Activated CD8-positive, alpha-beta T cell treated with anti-CD3 and anti-CD28 coated beads, Interleukin-2, amount 10 ng/mL, durations not matched to agents 7 days and 5 days (primary cell): ENCODE measurements at regions of chr7 and their contacts with region 1.

Region 1: GRCh38 chr7:101410743-101411507 is 48.2 kb downstream of the COL26A1 start:
- DNase-seq: peak; percentile 50
- ATAC-seq: peak; percentile 39
- H3K4me3 Mint-ChIP-seq: no peak overlapping the region
- H3K27ac Mint-ChIP-seq: peak overlapping the region; percentile 44
- H3K4me1 Mint-ChIP-seq: peaks cover 12% of the 10 kb centered on the region
- H3K27me3 Mint-ChIP-seq: peaks cover 3% of the 10 kb centered on the region

Region 2: DNA sequence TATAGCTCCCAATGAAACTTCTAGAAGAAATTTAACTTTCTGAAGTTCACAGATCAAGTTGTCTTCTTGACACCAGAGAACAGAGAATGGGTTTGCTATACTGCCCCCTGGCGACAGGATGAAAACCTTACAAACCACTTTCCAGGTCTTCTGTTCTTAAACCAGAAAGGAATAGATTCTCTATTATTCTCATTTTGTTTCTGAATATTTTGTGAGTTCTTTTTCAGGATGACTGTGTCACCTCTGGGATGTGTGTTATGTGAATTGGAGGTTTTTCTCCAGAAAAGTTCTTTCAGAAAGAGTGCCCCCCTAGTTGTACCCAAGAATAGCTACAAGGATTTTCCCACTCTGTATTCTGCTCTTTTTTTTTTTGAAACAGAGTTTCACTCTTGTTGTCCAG is 95.6 kb before region 1 on chr7:
- CTCF ChIA-PET with region 1: no interaction called
- POLR2A ChIA-PET with region 1: no interaction called
- DNase-seq: peak; percentile 73
- ATAC-seq: no peak
- H3K4me3 Mint-ChIP-seq: no peak overlapping the region
- H3K27ac Mint-ChIP-seq: no peak overlapping the region
- H3K4me1 Mint-ChIP-seq: no peaks in the 10 kb centered on the region
- H3K27me3 Mint-ChIP-seq: no peaks in the 10 kb centered on the region

Region 3: DNA sequence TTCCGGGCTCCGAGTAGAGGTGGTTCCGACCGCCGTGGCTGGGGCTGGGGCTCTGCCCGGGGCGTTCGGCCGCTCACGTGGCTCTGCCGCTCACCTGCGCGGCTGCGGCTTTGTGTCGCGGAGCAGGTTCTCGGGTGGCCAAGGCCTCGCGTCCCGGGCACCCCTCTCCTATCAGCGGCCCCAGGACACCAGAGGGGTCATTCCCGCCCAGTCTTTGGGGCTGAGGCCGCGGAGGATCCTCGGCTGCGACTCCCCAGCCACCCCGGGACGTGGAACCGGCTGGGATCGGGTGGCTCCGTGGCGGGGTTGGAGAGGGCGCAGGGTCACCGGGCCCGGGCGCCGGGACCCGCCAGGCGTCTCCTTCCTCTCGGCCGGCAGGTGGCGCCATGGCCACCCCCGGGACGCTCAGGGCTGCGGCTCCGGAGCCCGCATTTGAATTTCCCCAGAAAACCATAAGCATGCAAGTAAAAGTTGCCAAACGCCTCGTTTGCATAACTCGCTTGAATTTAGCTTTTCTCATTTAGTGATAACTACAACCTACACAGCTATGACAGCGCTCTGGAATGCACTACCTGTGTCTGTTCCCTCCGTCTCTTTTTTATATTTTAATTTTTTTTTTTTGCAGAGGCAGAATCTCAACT is 47.1 kb before region 1 on chr7:
- CTCF ChIA-PET with region 1: interaction called, 65 read pairs
- POLR2A ChIA-PET with region 1: no interaction called
- DNase-seq: peak; percentile 77
- ATAC-seq: peak; percentile 94
- H3K4me3 Mint-ChIP-seq: no peak overlapping the region
- H3K27ac Mint-ChIP-seq: no peak overlapping the region
- H3K4me1 Mint-ChIP-seq: peaks cover 17% of the 10 kb centered on the region
- H3K27me3 Mint-ChIP-seq: peaks cover 25% of the 10 kb centered on the region

Region 4: GRCh38 chr7:101382937-101383336 is 28.0 kb before region 1 on chr7:
- CTCF ChIA-PET with region 1: interaction called, 13 read pairs
- POLR2A ChIA-PET with region 1: no interaction called
- DNase-seq: no peak
- ATAC-seq: no peak
- H3K4me3 Mint-ChIP-seq: no peak overlapping the region
- H3K27ac Mint-ChIP-seq: no peak overlapping the region
- H3K4me1 Mint-ChIP-seq: peaks cover 9% of the 10 kb centered on the region
- H3K27me3 Mint-ChIP-seq: peaks cover 10% of the 10 kb centered on the region

Region 5: GRCh38 chr7:101390901-101391301 is 20.0 kb before region 1 on chr7:
- CTCF ChIA-PET with region 1: interaction called, 31 read pairs
- POLR2A ChIA-PET with region 1: no interaction called
- DNase-seq: peak; percentile 82
- ATAC-seq: peak; percentile 88
- H3K4me3 Mint-ChIP-seq: peak overlapping the region; percentile 51
- H3K27ac Mint-ChIP-seq: peak overlapping the region; percentile 87
- H3K4me1 Mint-ChIP-seq: peaks cover 35% of the 10 kb centered on the region
- H3K27me3 Mint-ChIP-seq: peaks cover 6% of the 10 kb centered on the region

Region 6: DNA sequence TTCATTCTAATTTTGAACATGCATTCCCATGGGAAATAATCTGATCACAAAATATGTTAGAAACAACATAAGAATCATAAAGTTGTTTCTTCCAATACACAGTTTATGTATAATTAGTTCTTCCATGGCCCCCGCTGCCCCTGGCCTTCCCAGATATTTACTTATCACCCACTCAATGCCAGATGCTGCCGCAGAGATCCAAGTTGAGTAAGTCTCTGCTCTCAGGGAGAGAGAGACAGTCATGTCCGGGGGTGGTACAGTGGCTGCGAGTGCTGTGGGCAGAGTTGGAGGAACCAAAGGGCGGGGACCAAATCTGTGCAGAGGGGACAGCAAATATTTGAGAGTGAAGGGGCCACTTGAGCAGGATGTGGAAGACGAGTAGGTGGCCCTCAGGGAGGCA is 11.2 kb before region 1 on chr7:
- CTCF ChIA-PET with region 1: interaction called, 22 read pairs
- POLR2A ChIA-PET with region 1: no interaction called
- DNase-seq: no peak
- ATAC-seq: no peak
- H3K4me3 Mint-ChIP-seq: no peak overlapping the region
- H3K27ac Mint-ChIP-seq: no peak overlapping the region
- H3K4me1 Mint-ChIP-seq: no peaks in the 10 kb centered on the region
- H3K27me3 Mint-ChIP-seq: peaks cover 16% of the 10 kb centered on the region

Region 7: DNA sequence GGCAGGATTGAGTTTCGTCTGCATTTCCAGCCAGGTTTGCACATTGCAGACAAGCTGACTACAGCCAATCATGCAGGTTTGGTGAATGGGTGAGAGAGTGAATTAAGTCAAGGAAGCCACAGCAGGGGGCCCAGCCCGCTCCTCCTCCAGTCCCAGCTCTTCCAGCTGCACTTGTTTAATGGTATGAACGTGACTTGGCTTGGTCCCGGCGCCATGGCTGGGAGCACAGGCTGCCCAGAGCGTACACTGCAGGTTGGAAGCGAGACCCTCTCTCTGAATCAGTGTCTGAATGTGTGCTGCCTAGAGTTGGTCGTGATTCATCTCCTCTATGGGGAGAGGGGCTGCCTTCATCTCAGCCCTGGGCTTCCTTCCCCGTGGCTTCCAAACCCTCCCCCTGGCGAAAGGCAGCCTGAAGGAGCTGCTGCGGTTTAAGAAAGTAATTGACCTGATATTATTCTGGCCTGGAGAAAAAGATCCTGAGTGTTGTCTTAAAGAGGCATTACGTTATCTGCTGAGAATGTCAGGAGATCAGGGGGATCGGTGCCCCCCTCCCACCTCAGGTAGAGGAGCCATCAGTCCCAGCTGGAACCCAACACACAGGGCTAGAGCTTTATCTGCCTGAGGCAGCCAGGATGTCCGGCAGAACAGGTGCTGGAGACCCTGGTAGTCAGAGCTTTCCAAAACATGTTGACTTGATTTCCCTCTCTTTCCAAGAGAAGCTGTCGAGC is 83.8 kb after region 1 on chr7:
- CTCF ChIA-PET with region 1: no interaction called
- POLR2A ChIA-PET with region 1: no interaction called
- DNase-seq: no peak
- ATAC-seq: no peak
- H3K4me3 Mint-ChIP-seq: no peak overlapping the region
- H3K27ac Mint-ChIP-seq: no peak overlapping the region
- H3K4me1 Mint-ChIP-seq: no peaks in the 10 kb centered on the region
- H3K27me3 Mint-ChIP-seq: peaks cover 4% of the 10 kb centered on the region